OCI-LY7 (cell line): ENCODE measurements at regions of chrX and their contacts with region 1.

Region 1: GRCh38 chrX:40792433-40792832 is 57.1 kb upstream of the MED14 start:
- DNase-seq: no peak
- H3K4me3 ChIP-seq: no peak overlapping the region
- H3K27ac ChIP-seq: no peak overlapping the region
- H3K4me1 ChIP-seq: no peaks in the 10 kb centered on the region
- CTCF ChIP-seq: no peak

Region 2: DNA sequence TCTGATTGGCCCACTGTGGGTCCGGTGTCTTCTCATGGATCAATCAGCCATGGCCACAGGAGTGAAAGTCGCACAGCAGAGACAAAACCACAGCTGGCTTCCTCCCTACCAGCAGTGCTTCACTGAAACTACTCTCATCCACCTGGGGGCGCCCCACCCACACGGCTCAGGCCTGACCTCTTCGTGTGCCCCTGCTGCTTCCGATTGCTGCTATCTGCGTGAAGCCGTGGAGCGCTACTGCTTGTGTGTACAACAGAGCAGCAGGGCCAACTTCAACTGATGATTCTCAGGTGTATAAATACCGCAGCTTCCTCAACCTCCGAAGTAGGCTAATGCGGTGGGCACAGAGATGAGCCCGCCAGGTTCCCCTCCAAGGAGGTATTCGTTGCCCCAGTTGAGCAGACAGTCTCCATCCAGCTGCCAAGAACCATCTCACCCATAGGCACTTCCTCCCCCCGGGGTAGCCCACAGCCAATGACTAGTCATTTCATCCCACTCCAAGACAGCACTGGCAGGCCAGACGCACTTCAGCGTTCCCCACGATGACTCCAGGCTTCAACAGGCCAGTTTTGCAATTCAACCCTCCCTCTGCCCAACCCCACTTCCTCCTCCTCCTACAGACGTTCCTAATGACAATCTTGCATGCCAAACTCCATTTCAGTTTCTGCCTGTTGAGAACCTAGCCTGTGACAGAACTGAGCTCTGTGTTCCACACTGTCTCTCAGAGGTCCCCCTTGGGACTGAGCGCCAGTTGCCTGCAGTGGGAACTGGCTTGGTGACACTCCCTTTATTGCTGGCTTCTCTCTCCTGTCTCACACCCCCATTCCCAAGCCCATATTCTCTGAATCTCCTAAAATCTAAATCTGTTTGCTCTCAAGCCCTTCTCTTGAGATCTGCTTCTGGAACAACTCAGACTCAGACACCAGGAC is 253.0 kb before region 1 on chrX:
- CTCF ChIA-PET with region 1: interaction called, 6 read pairs
- POLR2A ChIA-PET with region 1: no interaction called
- intact Hi-C with region 1: loop called (anchors 1 kb)
- DNase-seq: peak; percentile 1
- H3K4me3 ChIP-seq: no peak overlapping the region
- H3K27ac ChIP-seq: no peak overlapping the region
- H3K4me1 ChIP-seq: no peaks in the 10 kb centered on the region
- CTCF ChIP-seq: peak; percentile 43; the same call in 1 of the 2 replicates

Region 3: GRCh38 chrX:42269182-42269581 is 1476.7 kb after region 1 on chrX:
- CTCF ChIA-PET with region 1: no interaction called
- POLR2A ChIA-PET with region 1: no interaction called
- intact Hi-C with region 1: no loop called
- DNase-seq: no peak
- H3K4me3 ChIP-seq: no peak overlapping the region
- H3K27ac ChIP-seq: no peak overlapping the region
- H3K4me1 ChIP-seq: no peaks in the 10 kb centered on the region
- CTCF ChIP-seq: no peak